CD4-positive, alpha-beta T cell (primary cell): ENCODE measurements at regions of chr10 and their contacts with region 1.

Region 1: GRCh38 chr10:43255634-43256431 is 11.0 kb downstream of the RASGEF1A start:
- DNase-seq: peak in 5 of 14 experiments; percentile 32 to 63 (median 54)
- ATAC-seq: peak; percentile 70
- H3K4me3 ChIP-seq: no peak overlapping the region
- H3K4me3 Mint-ChIP-seq: no peak overlapping the region
- H3K27ac ChIP-seq: no peak overlapping the region
- H3K27ac Mint-ChIP-seq: no peak overlapping the region
- H3K4me1 ChIP-seq: peaks cover 21% of the 10 kb centered on the region
- H3K4me1 Mint-ChIP-seq: peaks cover 5% of the 10 kb centered on the region
- H3K27me3 ChIP-seq: no peaks in the 10 kb centered on the region
- H3K27me3 Mint-ChIP-seq: peaks cover 4% of the 10 kb centered on the region
- CTCF ChIP-seq: peak; percentile 27

Region 2: DNA sequence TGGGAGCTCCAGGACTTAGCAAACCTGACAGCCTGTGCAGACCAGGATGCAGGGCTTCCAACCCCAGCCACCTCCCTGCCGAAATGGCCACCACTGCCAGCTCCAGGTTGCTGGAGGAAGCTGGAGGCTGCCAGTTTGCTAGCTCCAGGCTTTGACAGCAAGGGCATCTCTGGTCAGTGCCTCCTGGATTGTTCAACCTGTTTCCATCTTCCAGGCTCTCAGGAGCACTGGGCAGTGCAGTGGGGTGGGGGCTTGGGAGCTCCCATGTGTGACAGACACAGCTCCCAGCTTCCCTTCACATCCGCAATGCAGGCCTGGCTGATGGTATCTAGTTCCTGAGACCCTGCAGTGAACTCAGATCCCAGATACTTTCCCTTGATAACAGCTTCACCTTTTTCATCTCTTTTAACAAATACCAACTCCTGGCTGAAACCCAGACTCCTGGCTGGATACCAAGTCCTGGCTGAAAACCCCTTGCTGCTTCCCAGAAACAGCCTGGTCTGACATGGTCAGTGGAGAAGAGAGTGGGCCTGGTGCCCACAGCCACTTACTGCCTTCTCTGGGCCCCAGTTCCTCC is 199.8 kb before region 1 on chr10:
- CTCF ChIA-PET with region 1: no interaction called
- POLR2A ChIA-PET with region 1: no interaction called
- intact Hi-C with region 1: loop called in 1 of 2 experiments (anchors 10 kb)
- DNase-seq: no peak
- ATAC-seq: no peak
- H3K4me3 ChIP-seq: no peak overlapping the region
- H3K4me3 Mint-ChIP-seq: no peak overlapping the region
- H3K27ac ChIP-seq: no peak overlapping the region
- H3K27ac Mint-ChIP-seq: no peak overlapping the region
- H3K4me1 ChIP-seq: no peaks in the 10 kb centered on the region
- H3K4me1 Mint-ChIP-seq: no peaks in the 10 kb centered on the region
- H3K27me3 ChIP-seq: peaks cover 0 to 2% of the 10 kb centered on the region in 2 experiments
- H3K27me3 Mint-ChIP-seq: peaks cover 11% of the 10 kb centered on the region
- CTCF ChIP-seq: no peak